Activated CD4-positive, alpha-beta memory T cell treated with anti-CD3 and anti-CD28 coated beads for 36 hours (primary cell): ENCODE measurements at regions of chr5 and their contacts with region 1.

Region 1: GRCh38 chr5:61357745-61358144 is 25.7 kb downstream of the ZSWIM6 start:
- DNase-seq: peak; percentile 25
- H3K4me3 Mint-ChIP-seq: no peak overlapping the region
- H3K27ac Mint-ChIP-seq: no peak overlapping the region
- H3K4me1 Mint-ChIP-seq: peaks cover 21% of the 10 kb centered on the region
- H3K27me3 Mint-ChIP-seq: no peaks in the 10 kb centered on the region

Region 2: DNA sequence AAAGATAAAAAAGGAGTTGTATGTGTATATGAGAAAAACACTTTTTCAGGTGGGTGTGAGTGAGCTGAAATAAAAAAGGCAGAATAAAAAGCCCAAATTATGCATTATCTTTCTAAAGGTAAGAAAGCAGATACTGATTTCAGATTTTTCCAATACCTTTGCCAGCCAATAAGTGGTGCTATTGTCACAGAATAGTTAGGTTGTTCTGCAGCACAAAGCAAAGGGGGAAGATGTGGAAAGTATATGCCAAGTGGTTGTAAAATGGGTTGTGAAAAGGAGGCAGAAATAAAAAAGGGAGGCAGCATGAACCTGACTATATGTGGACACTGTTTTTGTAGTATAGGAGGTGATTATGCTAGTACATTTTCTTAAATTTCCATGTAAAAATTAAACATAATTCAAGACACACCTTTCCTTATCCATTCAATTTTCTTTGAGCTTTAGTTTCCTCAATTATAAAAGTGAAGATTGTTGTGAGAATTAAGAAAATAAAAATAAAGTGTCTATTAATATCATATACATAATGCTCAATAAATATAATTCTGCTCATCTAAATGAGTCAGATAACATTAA is 302.2 kb before region 1 on chr5:
- CTCF ChIA-PET with region 1: interaction called, 10 read pairs
- POLR2A ChIA-PET with region 1: no interaction called
- intact Hi-C with region 1: no loop called
- DNase-seq: no peak
- H3K4me3 Mint-ChIP-seq: no peak overlapping the region
- H3K27ac Mint-ChIP-seq: no peak overlapping the region
- H3K4me1 Mint-ChIP-seq: peaks cover 4% of the 10 kb centered on the region
- H3K27me3 Mint-ChIP-seq: no peaks in the 10 kb centered on the region